AG04450 (cell line): ENCODE measurements at regions of chr12 and their contacts with region 1.

Region 1: DNA sequence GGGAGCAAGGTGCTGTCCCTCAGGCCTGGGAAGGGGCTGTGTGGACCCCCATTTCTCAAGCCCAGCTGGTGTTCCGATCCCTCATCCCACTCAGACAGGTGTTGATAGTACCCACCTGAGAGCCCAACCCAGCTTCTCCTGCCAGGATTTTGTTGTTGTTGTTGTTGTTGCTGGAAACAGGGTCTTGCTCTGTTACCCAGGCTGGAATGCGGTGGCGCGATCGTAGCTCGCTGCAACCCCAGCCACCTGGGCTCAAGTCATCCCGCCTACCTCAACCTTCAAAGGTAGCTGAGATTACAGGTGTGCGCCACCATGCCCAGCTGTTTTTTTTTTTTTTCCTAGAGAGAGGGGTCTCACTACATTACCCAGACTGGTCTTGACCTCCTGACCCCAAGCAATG is 209.9 kb downstream of the PHETA1 start:
- DNase-seq: no peak
- H3K4me3 ChIP-seq: no peak overlapping the region
- H3K27ac ChIP-seq: no peak overlapping the region
- H3K27me3 ChIP-seq: no peaks in the 10 kb centered on the region
- CTCF ChIP-seq: no peak

Region 2: DNA sequence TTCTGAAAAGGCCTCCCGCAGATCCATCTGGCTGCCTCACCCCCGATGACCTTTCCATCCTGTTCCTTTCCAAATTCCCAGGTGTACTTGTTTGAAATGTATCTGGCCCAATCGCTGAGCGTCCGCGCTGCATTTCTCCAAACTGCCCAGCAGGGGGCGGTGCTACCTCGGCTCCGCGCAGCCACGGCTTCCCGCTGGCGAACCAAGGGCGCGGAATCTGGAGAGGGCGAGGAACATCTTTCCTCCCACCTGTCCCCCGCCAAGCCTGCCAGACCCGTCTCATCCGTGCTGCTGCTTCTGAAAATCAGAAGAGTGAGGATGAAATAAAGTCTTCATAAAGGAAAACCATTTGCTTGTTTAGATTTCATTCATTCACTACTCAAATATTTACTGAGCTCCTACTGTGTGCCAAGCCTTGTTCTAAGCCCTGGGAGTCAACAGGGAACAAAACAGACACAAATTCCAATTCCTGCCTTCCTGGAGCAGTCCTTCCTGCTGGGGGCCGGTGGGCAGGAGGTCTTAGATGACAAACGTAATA is 221.8 kb before region 1 on chr12:
- CTCF ChIA-PET with region 1: interaction called, 10 read pairs
- POLR2A ChIA-PET with region 1: no interaction called
- DNase-seq: no peak
- H3K4me3 ChIP-seq: no peak overlapping the region
- H3K27ac ChIP-seq: no peak overlapping the region
- H3K27me3 ChIP-seq: no peaks in the 10 kb centered on the region
- CTCF ChIP-seq: peak; percentile 85

Region 3: GRCh38 chr12:111126331-111126730 is 32.7 kb before region 1 on chr12:
- CTCF ChIA-PET with region 1: no interaction called
- POLR2A ChIA-PET with region 1: no interaction called
- DNase-seq: no peak
- H3K4me3 ChIP-seq: no peak overlapping the region
- H3K27ac ChIP-seq: no peak overlapping the region
- H3K27me3 ChIP-seq: peaks cover 5% of the 10 kb centered on the region
- CTCF ChIP-seq: no peak

Region 4: GRCh38 chr12:111181143-111181726 is 22.2 kb after region 1 on chr12:
- CTCF ChIA-PET with region 1: no interaction called
- POLR2A ChIA-PET with region 1: no interaction called
- DNase-seq: no peak
- H3K4me3 ChIP-seq: no peak overlapping the region
- H3K27ac ChIP-seq: no peak overlapping the region
- H3K27me3 ChIP-seq: peaks cover 19% of the 10 kb centered on the region
- CTCF ChIP-seq: no peak

Region 5: GRCh38 chr12:111457577-111457976 is 298.6 kb after region 1 on chr12:
- CTCF ChIA-PET with region 1: no interaction called
- POLR2A ChIA-PET with region 1: no interaction called
- DNase-seq: no peak
- H3K4me3 ChIP-seq: no peak overlapping the region
- H3K27ac ChIP-seq: no peak overlapping the region
- H3K27me3 ChIP-seq: no peaks in the 10 kb centered on the region
- CTCF ChIP-seq: no peak